ENCODE measurements at regions of chr10 and their contacts with region 1.

Region 1: DNA sequence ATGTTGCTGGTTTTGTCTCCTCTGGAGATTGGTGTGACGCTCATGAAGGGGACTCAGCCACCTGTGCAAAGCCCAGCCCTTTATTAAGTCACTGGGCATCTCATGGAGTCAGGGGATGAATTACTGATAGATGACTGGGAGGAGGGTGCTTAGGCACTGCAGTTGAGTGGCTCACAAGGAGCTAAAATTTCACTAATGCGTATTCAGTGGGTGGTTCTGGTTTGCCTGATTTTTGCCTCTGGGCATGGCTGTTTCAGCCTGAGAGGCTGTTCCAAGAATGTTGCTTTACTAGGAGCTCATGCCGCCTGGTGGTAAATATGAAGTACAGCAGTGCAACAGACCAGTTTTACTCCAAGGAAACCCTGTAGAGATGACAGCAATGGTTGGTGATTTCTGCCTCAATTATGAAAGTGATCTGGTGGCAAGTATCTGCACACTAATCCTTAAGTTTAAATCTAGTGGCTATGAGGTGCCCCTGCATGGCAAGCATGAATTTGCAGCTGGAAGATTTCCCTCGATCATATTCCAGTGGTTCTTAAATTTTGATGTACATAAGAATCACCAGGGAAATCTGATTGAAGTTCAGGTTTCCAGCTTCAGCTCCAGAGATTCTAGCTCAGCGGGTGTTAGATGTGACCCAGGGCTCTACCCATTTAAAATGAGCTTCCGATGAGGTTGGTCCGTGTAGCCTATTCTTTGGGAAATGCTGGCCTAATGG is 19.9 kb downstream of the ACTA2 start:
- H3K4me3 ChIP-seq: no peak overlapping the region
- H3K27ac ChIP-seq: no peak overlapping the region
- H3K4me1 ChIP-seq: peaks cover 5% of the 10 kb centered on the region; the same call in 1 of the 2 replicates
- CTCF ChIP-seq: peak; percentile 80

Region 2: GRCh38 chr10:88687853-88688467 is 244.7 kb before region 1 on chr10:
- CTCF ChIA-PET with region 1: interaction called, 13 read pairs
- POLR2A ChIA-PET with region 1: no interaction called
- H3K4me3 ChIP-seq: no peak overlapping the region
- H3K27ac ChIP-seq: no peak overlapping the region
- H3K4me1 ChIP-seq: no peaks in the 10 kb centered on the region
- CTCF ChIP-seq: no peak

Region 3: DNA sequence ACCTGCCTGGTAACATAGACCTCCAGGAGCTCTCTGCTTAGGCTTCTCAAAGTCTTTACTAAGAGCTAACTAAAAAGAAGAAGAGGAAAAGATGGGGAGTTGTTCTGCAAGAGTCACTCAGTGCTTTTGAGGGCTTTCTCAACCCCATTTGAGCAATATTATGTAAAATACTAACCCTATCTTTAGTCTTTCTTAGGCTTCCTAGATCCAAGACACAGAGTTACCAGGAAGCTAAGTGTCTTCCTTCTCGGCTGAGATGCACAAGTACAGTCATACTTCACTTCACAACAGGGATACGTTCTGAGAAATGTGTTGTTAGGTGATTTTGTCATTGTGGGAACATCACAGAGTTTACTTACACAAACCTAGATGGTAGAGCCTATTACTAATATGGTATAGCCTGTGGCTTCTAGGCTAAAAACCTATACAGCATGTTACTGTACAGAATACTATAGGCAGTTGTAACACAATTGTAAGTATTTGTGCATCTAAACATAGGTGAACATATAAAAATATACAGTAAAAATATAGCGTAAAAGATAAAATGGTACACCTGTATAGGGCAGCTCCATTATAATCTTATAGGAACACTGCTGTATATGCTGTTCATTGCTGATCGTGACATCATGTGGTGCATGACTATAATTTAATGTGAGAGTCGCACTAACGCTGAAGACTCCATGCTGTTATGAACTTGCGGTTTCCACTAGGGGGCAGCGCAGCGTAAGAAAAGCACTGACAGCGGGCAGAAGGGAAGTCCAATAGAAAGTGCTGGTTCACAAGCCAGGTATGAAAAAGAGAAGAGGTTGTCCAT is 97.4 kb before region 1 on chr10:
- CTCF ChIA-PET with region 1: interaction called, 456 read pairs
- POLR2A ChIA-PET with region 1: interaction called, 7 read pairs
- H3K4me3 ChIP-seq: no peak overlapping the region
- H3K27ac ChIP-seq: no peak overlapping the region
- H3K4me1 ChIP-seq: 0 out of 2 replicates have a peak, but pooled peaks cover 3% of the 10 kb centered on the region
- CTCF ChIP-seq: peak; percentile 72

Region 4: GRCh38 chr10:88943778-88944177 is 11.1 kb after region 1 on chr10:
- CTCF ChIA-PET with region 1: interaction called, 14 read pairs
- POLR2A ChIA-PET with region 1: no interaction called
- H3K4me3 ChIP-seq: no peak overlapping the region
- H3K27ac ChIP-seq: no peak overlapping the region
- H3K4me1 ChIP-seq: no peaks in the 10 kb centered on the region
- CTCF ChIP-seq: no peak

Region 5: DNA sequence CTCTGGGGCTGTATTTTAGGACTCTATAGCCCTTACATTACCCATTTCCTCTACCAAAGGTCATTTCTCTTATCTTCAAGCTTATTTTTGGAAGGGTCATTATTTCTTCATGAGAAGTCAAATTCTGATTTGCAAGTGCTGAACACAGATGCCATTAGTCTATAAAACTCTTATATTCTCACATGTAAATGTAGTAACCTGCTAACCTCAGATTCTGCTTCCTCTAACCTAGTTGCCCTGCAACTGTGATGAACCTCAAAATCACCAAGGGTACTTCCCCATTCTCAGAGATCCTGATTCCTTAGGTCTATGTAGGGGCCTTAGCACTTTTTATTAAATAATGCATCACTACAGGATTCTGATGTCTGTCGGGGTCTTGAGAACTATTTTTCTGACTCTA is 64.2 kb after region 1 on chr10:
- CTCF ChIA-PET with region 1: interaction called, 137 read pairs
- POLR2A ChIA-PET with region 1: no interaction called
- H3K4me3 ChIP-seq: no peak overlapping the region
- H3K27ac ChIP-seq: no peak overlapping the region
- H3K4me1 ChIP-seq: peaks cover 19% of the 10 kb centered on the region
- CTCF ChIP-seq: no peak

Region 6: DNA sequence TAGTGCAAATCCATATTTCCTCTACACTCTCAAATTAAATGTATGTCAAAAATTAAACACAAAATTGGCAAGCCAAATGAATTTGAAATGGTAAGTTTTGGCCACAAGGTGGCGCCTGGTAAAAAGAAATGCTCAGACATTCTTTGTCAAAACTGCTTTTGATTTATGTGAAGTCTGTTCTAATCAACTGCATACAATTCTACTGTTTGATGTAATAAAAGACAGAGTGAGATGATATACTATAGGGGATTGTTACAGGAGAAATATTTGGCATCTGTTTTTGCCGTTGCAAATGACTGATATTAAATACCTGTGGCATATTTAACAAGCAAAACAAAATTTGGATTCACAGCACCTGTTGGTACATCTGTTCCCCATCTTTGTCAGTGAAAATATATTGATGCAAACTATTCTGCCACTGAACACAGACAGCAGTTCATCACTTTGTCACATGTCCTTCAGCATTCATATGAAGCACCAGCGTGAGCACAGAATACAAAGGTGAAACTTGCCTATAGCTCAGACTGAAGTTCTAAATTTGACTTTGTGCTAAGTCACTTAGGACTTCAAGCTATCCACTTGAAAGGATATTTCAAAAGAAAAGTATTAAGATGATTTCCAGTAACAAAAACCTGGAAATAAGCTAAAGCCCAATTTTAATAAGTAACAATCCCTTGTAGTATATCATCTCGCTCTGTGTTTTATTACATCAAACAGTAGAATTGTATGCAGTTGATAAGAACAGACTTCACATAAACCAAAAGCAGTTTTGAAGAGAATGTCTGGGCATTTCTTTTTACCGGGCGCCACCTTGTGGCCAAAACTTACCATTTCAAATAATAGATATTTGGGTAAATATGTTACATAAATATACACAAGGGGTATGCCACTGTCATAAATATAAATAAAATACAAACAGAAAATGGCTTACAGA is 284.6 kb after region 1 on chr10:
- CTCF ChIA-PET with region 1: interaction called, 98 read pairs
- POLR2A ChIA-PET with region 1: no interaction called
- H3K4me3 ChIP-seq: no peak overlapping the region
- H3K27ac ChIP-seq: no peak overlapping the region
- H3K4me1 ChIP-seq: 0 out of 2 replicates have a peak, but pooled peaks cover 2% of the 10 kb centered on the region
- CTCF ChIP-seq: peak; percentile 44; the same call in 1 of the 2 replicates

Measured in HEK293 (cell line).